H1 (cell line): ENCODE measurements at regions of chr15 and their contacts with region 1.

Region 1: DNA sequence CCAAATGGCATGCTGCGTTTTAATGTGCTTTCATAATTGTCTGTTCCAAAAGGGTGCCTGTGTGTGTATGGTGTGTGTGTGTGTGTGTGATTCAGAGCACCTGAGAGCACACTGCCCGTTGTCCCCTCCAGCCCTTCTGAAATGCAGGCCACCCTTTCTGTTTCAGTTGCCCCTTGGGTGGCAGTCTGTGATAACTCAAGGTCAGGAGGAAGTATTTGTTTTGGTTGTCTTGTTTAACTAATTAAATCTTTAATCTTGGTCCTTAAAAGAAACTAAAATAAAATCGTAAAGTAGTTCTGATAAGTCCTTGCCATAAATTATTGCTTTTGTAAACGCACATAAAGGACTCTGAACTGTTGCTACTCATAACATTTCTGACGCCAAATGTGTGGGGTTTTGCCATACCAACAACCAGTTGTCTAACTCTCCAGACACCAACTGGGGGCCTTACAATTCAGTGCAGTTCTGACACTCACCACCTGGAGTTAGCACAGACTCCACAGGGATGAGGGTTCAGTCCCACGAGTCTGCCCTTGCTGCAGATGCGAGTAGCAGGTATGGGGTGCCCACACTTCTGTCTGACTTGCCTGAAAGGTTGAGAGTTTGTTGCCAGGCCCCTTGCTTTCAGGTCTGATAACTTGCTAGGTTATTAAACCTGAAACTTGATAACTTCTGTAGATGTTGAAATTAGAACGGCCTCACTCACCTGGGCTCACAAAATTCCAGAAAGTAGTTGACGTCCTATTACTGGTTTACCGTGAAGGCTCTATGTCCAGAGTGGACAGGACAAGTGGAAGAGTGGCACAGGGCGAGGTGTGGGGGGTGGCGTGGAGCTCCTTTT is 157.3 kb downstream of the IGF1R start:
- DNase-seq: no peak
- H3K4me3 ChIP-seq: no peak overlapping the region
- H3K27ac ChIP-seq: no peak overlapping the region
- H3K4me1 ChIP-seq: peaks cover 11 to 35% (median 21%) of the 10 kb centered on the region in 4 experiments
- H3K27me3 ChIP-seq: no peaks in the 10 kb centered on the region
- CTCF ChIP-seq: peak; percentile 13 to 30 (median 29); a peak in 3 of 4 replicates
- EP300 ChIP-seq: no peak
- POLR2A ChIP-seq: no peak
- RAD21 ChIP-seq: peak; percentile 22 to 36; a peak in 3 of 4 replicates

Region 2: GRCh38 chr15:98794754-98795153 is 10.9 kb before region 1 on chr15:
- CTCF ChIA-PET with region 1: interaction called, 16 read pairs
- POLR2A ChIA-PET with region 1: interaction called, 8 read pairs
- DNase-seq: no peak
- H3K4me3 ChIP-seq: no peak overlapping the region
- H3K27ac ChIP-seq: no peak overlapping the region
- H3K4me1 ChIP-seq: peaks cover 12 to 46% (median 30%) of the 10 kb centered on the region in 4 experiments
- H3K27me3 ChIP-seq: no peaks in the 10 kb centered on the region
- CTCF ChIP-seq: no peak
- EP300 ChIP-seq: no peak
- POLR2A ChIP-seq: no peak
- RAD21 ChIP-seq: no peak

Region 3: GRCh38 chr15:98889930-98890695 is 84.5 kb after region 1 on chr15:
- CTCF ChIA-PET with region 1: no interaction called
- POLR2A ChIA-PET with region 1: no interaction called
- DNase-seq: no peak
- H3K4me3 ChIP-seq: no peak overlapping the region
- H3K27ac ChIP-seq: no peak overlapping the region
- H3K4me1 ChIP-seq: peaks cover 0 to 8% (median 2%) of the 10 kb centered on the region in 4 experiments; a peak in 5 of 7 replicates
- H3K27me3 ChIP-seq: no peaks in the 10 kb centered on the region
- CTCF ChIP-seq: no peak
- EP300 ChIP-seq: no peak
- POLR2A ChIP-seq: no peak
- RAD21 ChIP-seq: no peak